Motor neuron (in vitro differentiated cells): ENCODE measurements at regions of chr19 and their contacts with region 1.

Region 1: GRCh38 chr19:13861732-13862531 is 15.0 kb upstream of the NANOS3 start:
- ATAC-seq: peak; percentile 71 to 86 (median 76)
- H3K4me3 ChIP-seq: peak overlapping the region in 4 of 5 donors; percentile 5 to 14 (median 8)
- H3K27ac ChIP-seq: no peak overlapping the region
- H3K4me1 ChIP-seq: peaks cover 23 to 25% of the 10 kb centered on the region in 2 donors

Region 2: DNA sequence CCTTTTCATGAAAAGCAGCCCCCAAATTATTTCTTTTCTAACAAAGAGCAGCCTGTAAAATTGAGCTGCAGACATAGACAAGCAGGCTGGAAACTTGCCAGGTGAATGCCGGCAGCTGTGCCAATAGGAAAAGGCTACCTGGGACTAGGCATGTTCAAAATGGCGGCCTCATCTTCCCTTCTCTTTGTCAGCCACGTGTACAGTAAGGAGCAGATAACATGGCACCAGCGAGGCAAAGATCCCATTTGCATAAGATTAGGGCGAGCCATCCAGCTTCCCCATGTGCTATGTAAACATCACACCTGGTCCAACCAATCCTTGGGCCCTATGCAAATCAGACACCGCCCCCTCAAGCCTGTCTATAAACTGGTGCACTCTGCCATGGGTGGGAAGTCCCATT is 324.5 kb before region 1 on chr19:
- in situ Hi-C with region 1: no loop called
- ATAC-seq: peak in 1 of 8 experiments; percentile 11
- H3K4me3 ChIP-seq: no peak overlapping the region
- H3K27ac ChIP-seq: no peak overlapping the region
- H3K4me1 ChIP-seq: no peaks in the 10 kb centered on the region

Region 3: GRCh38 chr19:13597640-13598039 is 264.3 kb before region 1 on chr19:
- in situ Hi-C with region 1: loop called in 8 of 9 experiments (anchors 10 to 25 kb)
- ATAC-seq: peak; percentile 91 to 99 (median 96)
- H3K4me3 ChIP-seq: no peak overlapping the region
- H3K27ac ChIP-seq: no peak overlapping the region
- H3K4me1 ChIP-seq: peaks cover 0 to 2% of the 10 kb centered on the region in 2 donors

Region 4: GRCh38 chr19:13621413-13621812 is 240.5 kb before region 1 on chr19:
- in situ Hi-C with region 1: loop called in 5 of 9 experiments (anchors 25 kb)
- ATAC-seq: peak; percentile 58 to 98 (median 78)
- H3K4me3 ChIP-seq: no peak overlapping the region
- H3K27ac ChIP-seq: no peak overlapping the region
- H3K4me1 ChIP-seq: peaks cover 24 to 28% of the 10 kb centered on the region in 2 donors

Region 5: DNA sequence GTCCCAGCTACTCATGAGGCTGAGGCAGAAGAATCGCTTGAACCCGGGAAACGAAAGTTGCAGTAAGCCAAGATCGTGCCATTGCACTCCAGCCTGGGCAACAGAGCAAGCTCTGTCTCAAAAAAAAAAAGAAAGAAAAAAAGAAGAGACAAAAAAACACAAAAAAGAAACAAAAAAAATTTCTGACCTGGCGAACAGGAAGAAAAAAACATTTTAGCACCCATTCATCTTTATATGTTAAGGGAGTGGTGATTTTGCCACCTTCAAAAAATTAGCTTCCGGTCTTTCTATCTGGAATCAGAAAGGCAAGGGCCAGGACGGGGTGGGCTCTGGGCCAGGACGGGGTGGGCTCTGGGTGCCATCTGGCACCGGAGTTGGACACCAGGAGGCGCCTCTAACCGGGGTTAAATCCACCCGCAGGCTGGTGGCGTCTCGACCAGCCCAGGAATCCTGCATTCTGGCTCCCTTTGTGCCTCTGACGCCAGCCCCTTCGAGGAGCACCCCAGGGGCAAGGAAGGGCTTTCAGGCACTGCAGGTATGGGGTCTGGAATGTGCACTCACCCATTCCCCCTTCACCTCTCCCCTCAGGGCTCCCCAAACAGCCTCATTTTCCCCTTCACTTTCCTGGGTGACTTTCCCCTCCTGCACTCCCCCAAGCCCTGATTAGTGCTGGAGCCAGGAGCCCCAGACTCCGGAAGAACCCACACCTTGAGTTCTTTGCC is 77.0 kb before region 1 on chr19:
- in situ Hi-C with region 1: loop called in 1 of 9 experiments (anchors 10 kb)
- ATAC-seq: peak; percentile 5 to 78 (median 70)
- H3K4me3 ChIP-seq: no peak overlapping the region
- H3K27ac ChIP-seq: no peak overlapping the region
- H3K4me1 ChIP-seq: peaks cover 6 to 14% of the 10 kb centered on the region in 2 donors